ENCODE measurements at regions of chr16 and their contacts with region 1.

Region 1: GRCh38 chr16:27286451-27286850 is 17.9 kb upstream of the NSMCE1 start:
- ATAC-seq: peak in 1 of 8 experiments; percentile 29
- H3K4me3 ChIP-seq: no peak overlapping the region
- H3K27ac ChIP-seq: no peak overlapping the region
- H3K4me1 ChIP-seq: no peaks in the 10 kb centered on the region

Region 2: DNA sequence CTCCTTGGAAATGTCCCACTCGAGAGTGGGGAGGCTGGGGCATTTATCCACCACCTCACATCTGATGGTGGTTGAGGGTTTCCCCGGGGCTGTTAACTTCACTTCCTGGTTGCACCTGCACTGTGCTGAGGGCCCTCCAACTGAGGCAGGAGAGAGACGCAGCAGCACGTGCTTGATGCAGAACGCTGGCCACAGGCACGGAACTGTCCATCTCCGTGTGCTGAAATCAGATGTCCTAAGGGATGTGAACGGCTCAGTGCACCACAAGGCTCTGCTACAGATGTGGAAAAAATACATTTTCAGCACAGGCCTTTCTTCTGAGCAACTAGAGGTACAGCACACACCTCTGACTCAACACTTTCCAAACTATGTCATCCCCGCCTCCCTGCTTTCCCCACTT is 334.5 kb before region 1 on chr16:
- in situ Hi-C with region 1: no loop called
- ATAC-seq: peak in 3 of 8 experiments; percentile 28 to 50 (median 43)
- H3K4me3 ChIP-seq: no peak overlapping the region
- H3K27ac ChIP-seq: no peak overlapping the region
- H3K4me1 ChIP-seq: peaks cover 10 to 19% of the 10 kb centered on the region in 2 donors

Region 3: DNA sequence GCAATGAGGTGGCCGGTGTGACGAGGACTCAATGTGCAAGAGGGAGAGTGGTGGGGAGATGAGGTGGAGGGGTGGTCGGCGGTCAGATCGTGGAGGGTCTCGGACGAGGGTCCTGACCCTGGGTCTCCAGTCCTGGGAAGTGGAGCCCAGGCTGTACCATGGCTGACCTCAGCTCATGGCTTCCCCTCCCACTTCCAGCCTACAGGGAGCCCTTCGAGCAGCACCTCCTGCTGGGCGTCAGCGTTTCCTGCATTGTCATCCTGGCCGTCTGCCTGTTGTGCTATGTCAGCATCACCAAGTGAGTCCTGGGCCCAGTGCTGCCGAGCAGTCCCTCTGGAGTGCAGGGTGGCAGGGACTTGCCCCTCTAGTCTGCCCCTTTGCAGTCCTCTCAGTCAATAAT is 69.2 kb after region 1 on chr16:
- in situ Hi-C with region 1: loop called in 1 of 9 experiments (anchors 10 kb)
- ATAC-seq: peak in 2 of 8 experiments; percentile 54 to 71
- H3K4me3 ChIP-seq: no peak overlapping the region
- H3K27ac ChIP-seq: no peak overlapping the region
- H3K4me1 ChIP-seq: no peaks in the 10 kb centered on the region